PC-9 (cell line): ENCODE measurements at regions of chr12 and their contacts with region 1.

Region 1: DNA sequence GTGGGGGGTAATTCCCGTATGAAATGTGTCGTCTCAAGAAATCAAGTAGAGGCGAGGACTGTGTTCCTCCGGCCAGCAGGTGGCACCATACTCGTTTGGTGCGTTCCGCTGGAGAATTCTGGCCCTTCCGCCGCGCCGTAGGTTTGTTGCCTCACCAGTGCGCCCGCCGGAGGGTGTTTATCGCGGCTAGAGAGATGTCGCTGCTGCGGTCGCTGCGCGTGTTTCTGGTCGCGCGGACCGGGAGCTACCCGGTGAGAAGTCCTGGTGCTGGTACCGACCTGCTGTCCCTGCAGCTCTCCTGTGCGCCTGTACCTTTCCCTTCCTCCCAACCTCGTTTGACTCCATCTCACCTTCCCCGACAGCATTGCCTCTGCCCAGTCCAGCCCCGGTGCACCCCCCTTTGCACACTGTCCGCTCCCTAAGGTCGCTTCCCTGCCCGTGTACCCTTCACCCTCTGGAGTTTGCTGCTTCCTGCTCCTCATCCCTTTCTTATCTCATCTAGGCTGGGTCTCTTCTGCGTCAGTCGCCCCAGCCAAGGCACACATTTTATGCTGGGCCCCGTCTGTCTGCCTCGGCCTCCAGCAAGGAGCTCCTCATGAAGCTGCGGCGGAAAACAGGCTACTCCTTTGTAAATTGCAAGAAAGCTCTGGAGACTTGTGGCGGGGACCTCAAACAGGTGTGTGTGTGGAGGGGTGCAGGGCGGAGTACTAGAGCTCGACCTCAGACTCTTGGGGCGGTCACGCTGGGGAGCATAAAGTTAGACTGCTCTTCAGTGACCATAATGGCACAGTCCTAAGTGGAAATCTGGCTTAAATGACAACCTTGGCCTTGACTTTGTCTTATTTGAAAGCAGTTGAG is at the start of gene TSFM:
- DNase-seq: peak; percentile 81 to 91
- H3K4me3 ChIP-seq: peak within 1 kb of the TSS; percentile 96
- H3K27ac ChIP-seq: no peak within 1 kb of the TSS
- H3K4me1 ChIP-seq: peaks cover 8% of the 10 kb centered on the region
- H3K27me3 ChIP-seq: no peaks in the 10 kb centered on the region
- CTCF ChIP-seq: peak; percentile 91
- total RNA-seq, gene TSFM: 38.1 and 44.8 TPM in 2 replicates

Region 2: GRCh38 chr12:57803319-57803893 is 20.6 kb after region 1 on chr12:
- CTCF ChIA-PET with region 1: interaction called, 20 read pairs
- POLR2A ChIA-PET with region 1: no interaction called
- intact Hi-C with region 1: no loop called
- DNase-seq: peak in 1 of 2 experiments; percentile 24
- H3K4me3 ChIP-seq: no peak overlapping the region
- H3K27ac ChIP-seq: no peak overlapping the region
- H3K4me1 ChIP-seq: no peaks in the 10 kb centered on the region
- H3K27me3 ChIP-seq: no peaks in the 10 kb centered on the region
- CTCF ChIP-seq: peak; percentile 83